Activated CD4-positive, alpha-beta memory T cell treated with anti-CD3 and anti-CD28 coated beads for 36 hours (primary cell): ENCODE measurements at regions of chr1 and their contacts with region 1.

Region 1: GRCh38 chr1:111481387-111482221 is 7.8 kb downstream of the C1orf162 start:
- DNase-seq: peak; percentile 82
- H3K4me3 Mint-ChIP-seq: no peak overlapping the region
- H3K27ac Mint-ChIP-seq: no peak overlapping the region
- H3K4me1 Mint-ChIP-seq: peaks cover 25% of the 10 kb centered on the region
- H3K27me3 Mint-ChIP-seq: no peaks in the 10 kb centered on the region

Region 2: DNA sequence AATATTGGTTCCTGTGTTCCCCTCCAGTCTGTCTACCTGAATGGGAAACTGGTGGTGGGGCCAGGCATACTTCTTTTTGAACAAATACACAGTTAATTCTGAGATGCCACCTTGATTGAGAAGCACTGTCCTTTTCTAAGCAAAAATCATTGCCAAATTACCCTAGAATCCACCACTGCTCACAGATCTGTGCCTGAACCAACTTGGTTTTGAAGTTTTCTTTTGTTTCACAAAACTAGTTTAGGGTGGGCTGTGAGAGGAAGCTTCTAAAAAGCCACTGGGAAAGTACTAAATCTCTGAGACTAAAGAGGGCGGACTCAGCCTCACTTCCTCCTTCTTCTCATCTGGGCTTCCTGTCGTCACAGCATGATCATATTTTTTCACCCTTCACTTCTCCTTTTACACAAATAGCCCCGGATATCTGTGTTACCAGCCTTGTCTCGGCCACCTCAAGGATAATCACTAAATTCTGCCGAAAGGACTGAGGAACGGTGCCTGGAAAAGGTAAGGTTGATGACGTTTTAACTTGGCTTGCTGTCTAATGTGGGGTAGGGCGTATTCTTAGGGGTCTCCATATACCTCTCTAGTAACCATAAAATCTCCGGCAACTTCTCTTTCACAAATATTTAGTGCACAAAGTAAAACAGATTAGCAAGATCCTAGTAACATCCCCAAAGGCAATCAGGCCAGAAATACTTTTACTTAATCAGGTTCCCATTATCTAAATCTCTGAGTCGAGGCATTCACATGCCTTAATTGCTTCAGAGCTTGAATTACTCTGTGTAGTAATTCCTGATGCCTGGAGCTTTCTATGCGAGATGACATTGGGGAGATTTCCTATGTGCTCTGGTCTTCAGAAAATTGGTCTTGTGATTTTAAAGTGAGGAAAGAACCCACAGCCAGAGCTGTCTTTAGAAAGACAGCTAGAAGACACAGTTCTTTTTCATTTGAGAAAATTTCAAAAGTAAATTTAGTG is 608.6 kb before region 1 on chr1 and contains the start of gene CD53:
- CTCF ChIA-PET with region 1: no interaction called
- POLR2A ChIA-PET with region 1: no interaction called
- intact Hi-C with region 1: loop called (anchors 10 kb)
- DNase-seq: peak; percentile 63
- H3K4me3 Mint-ChIP-seq: peak within 1 kb of the TSS; percentile 98
- H3K27ac Mint-ChIP-seq: peak within 1 kb of the TSS; percentile 99
- H3K4me1 Mint-ChIP-seq: peaks cover 37% of the 10 kb centered on the region
- H3K27me3 Mint-ChIP-seq: no peaks in the 10 kb centered on the region
- total RNA-seq, gene CD53: 240 to 246 TPM

Region 3: DNA sequence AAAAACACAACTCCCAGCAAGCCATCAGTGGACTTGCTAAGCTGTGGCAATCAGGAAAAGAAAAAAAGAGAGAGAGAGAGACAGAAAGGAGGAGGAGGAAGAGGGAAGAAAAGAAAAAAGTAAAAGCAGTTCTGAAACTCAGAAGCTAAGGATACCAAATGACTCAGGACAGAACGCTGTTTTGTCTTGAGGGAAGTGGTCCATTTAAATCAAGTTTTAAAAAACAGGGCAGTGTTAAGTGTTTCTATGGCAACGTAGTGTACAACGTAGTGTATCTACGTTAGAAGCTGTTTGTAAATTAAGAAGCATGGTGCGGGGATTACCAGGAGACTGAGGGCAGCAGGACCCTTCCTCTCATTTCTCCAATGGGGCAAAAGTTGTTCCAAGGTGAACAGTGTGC is 16.0 kb after region 1 on chr1:
- CTCF ChIA-PET with region 1: interaction called, 8 read pairs
- POLR2A ChIA-PET with region 1: interaction called, 6 read pairs
- intact Hi-C with region 1: loop called (anchors 1 kb)
- DNase-seq: no peak
- H3K4me3 Mint-ChIP-seq: no peak overlapping the region
- H3K27ac Mint-ChIP-seq: no peak overlapping the region
- H3K4me1 Mint-ChIP-seq: peaks cover 34% of the 10 kb centered on the region
- H3K27me3 Mint-ChIP-seq: no peaks in the 10 kb centered on the region

Region 4: DNA sequence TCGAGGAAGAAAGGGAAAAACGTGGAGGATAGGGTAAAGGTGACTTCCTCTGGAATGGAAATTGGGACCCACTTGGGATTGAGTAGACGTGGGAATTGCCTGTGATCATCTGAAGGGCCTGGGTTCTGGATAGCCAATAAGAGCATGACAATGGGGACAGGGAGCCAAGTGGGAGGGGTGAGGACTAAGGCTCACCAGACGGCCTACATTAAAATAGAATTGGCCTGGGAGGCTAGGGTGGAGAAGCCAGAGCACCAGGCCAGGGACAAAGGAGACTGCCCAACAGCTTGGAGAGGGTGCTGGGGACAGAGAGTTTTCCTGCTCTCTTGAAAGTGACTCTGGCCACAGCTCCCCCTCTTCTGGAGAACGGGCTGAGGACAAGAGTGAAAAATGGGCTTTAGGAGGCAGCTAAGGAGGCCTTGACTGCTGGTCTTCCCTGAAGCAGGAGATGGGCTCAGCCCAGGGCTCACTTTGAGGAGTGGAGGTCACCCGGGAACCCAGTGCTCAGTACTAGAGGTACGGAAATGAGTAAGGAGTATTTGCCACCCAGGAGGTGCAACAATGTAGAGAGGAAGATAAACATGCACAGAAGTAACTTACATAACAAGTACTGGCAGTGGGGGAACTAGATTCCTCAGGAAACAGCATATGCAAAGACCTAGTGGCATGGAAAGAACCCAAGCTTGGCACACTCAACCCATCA is 238.8 kb after region 1 on chr1:
- CTCF ChIA-PET with region 1: interaction called, 11 read pairs
- POLR2A ChIA-PET with region 1: no interaction called
- intact Hi-C with region 1: no loop called
- DNase-seq: no peak
- H3K4me3 Mint-ChIP-seq: no peak overlapping the region
- H3K27ac Mint-ChIP-seq: peak overlapping the region; percentile 38
- H3K4me1 Mint-ChIP-seq: peaks cover 18% of the 10 kb centered on the region
- H3K27me3 Mint-ChIP-seq: no peaks in the 10 kb centered on the region

Region 5: GRCh38 chr1:111739194-111739924 is 257.8 kb after region 1 on chr1 and contains the start of gene INKA2:
- CTCF ChIA-PET with region 1: interaction called, 11 read pairs
- POLR2A ChIA-PET with region 1: interaction called, 3 read pairs
- intact Hi-C with region 1: no loop called
- DNase-seq: peak; percentile 88
- H3K4me3 Mint-ChIP-seq: peak within 1 kb of the TSS; percentile 84
- H3K27ac Mint-ChIP-seq: no peak within 1 kb of the TSS
- H3K4me1 Mint-ChIP-seq: peaks cover 11% of the 10 kb centered on the region
- H3K27me3 Mint-ChIP-seq: peaks cover 28% of the 10 kb centered on the region
- total RNA-seq, gene INKA2: 1.4 to 2.3 TPM

Region 6: DNA sequence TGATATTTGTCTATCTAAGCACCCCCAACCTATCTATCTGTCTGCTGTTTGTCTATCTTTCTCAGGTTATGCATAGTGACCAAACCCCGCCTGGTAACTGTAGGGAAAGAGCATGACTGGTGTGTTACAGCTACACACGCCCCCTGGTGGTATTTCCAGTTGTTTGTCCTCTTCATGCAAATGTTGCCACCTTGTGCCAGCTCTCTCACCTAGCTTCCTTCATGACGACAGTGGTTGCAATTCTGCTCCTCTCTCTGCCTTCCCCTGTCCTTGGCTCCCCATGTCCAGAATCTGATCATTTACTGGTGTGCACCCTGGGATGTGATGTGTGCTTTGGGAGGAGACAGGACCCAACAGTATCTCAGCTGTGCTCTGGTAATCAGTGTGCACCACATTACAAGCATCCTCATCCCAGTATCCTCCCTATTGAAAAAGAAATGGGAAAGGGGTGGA is 265.7 kb after region 1 on chr1:
- CTCF ChIA-PET with region 1: interaction called, 35 read pairs
- POLR2A ChIA-PET with region 1: no interaction called
- intact Hi-C with region 1: loop called (anchors 1 kb)
- DNase-seq: peak; percentile 80
- H3K4me3 Mint-ChIP-seq: no peak overlapping the region
- H3K27ac Mint-ChIP-seq: no peak overlapping the region
- H3K4me1 Mint-ChIP-seq: peaks cover 3% of the 10 kb centered on the region
- H3K27me3 Mint-ChIP-seq: no peaks in the 10 kb centered on the region

Region 7: DNA sequence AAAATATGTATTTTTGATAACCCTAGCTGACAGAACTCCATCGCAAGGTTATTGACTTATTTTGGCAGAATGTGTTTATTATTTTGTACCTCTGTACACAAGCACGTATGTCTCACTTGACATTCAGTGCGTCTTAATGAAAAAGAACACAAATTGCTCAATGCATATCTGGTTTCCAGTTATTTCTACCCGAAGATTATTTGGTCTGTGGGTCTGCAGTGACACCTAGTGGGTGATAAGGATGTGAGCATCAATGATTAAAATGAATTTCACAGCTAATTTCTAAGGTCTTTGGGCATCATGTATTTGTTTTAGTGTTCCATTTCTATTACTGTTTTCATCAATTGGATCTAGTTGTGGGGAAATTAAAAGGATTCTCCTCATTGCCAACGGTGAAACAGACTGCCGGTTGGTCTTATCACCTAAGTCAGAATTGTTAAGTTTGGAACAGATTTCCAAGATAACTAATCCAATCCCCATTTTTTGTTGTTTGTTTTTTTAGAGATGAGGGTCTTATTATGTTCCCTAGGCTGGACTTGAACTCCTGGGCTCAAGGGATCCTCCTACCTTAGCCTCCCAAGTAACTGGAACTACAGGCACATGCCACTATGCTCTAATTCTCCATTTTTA is 288.0 kb after region 1 on chr1:
- CTCF ChIA-PET with region 1: interaction called, 34 read pairs
- POLR2A ChIA-PET with region 1: no interaction called
- intact Hi-C with region 1: no loop called
- DNase-seq: peak; percentile 44
- H3K4me3 Mint-ChIP-seq: no peak overlapping the region
- H3K27ac Mint-ChIP-seq: no peak overlapping the region
- H3K4me1 Mint-ChIP-seq: peaks cover 3% of the 10 kb centered on the region
- H3K27me3 Mint-ChIP-seq: no peaks in the 10 kb centered on the region